ENCODE measurements at regions of chr5 and their contacts with region 1.

Region 1: GRCh38 chr5:181191529-181192394 is 13.2 kb downstream of the TRIM7 start:
- DNase-seq: peak; percentile 97
- ATAC-seq: peak; percentile 79

Region 2: DNA sequence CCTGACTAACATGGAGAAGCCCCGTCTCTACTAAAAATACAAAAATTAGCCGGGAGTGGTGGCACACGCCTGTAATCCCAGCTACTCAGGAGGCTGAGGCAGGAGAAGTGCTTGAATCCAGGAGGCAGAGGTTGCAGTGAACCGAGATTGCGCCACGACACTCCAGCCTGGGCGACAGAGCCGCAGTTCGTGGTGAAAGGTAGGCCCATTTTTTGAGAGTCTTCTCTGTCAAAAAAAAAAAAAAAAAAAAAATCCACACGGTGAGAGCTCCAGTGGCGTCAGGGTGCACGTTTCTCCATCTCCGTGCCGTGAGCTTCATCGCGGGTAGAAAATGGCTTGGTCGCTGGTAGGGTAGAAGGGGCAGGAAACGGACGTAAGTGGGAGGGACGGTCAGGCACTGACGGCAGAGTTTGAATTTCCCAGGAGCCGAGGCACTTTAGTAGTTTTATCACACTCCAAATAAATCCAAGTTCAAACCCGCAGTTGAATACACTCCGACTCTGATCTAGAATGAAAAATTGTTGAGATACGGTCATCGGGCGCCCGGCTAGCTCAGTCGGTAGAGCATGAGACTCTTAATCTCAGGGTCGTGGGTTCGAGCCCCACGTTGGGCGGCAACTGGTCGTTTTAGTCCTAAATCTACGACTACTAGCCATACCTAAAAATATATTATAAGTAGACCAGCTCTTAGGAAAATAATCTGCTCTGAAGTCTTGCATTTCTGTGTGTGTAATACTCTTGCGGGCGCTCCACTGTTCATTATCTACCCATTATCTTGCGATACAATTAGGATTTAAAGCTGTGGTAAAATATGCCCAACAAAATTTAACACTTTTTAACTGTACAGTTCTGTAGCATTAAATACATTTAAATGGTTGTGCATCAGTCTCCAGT is 15.7 kb after region 1 on chr5:
- intact Hi-C with region 1: loop called (anchors 2 kb)
- DNase-seq: peak; percentile 87
- ATAC-seq: peak; percentile 48

Region 3: DNA sequence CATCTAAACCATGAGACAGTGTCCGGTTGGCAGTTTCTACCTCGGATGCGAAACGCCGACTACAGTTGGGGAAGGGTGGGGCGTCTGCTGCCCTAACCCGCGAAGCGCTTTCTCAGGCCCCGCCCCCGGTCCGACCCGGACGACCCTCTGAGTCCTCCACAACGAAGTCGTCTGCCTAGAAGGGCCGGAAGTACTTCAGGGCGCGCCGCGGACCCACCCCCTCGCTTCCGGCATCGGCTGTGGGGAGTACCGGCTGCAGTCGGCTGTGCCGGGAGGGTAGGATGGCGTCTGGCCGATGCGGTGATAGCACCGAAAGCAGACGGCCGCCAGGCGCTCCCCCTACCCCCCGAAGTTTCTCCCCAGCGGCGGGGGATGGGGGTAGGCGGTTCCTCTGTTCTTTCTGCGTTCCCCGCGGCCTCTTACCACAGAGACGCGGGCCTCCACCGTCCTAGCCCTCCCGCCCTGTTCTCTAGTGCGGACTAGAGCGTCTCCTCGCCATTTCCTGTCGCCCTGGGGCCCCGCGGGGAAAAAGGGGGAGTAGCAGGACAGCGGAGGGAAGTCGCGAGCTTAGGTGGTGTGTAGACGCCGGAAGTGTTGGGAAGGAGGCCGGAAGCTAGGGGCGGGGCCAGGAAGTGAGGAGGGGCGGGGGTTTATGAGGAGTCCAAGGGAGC is 31.4 kb after region 1 on chr5 and contains the start of gene TRIM41:
- intact Hi-C with region 1: loop called (anchors 5 kb)
- DNase-seq: peak; percentile 100
- ATAC-seq: peak; percentile 89
- total RNA-seq, gene TRIM41: 20.7 TPM

Region 4: GRCh38 chr5:181261320-181262049 is 69.7 kb after region 1 on chr5:
- intact Hi-C with region 1: loop called (anchors 2 kb)
- DNase-seq: peak; percentile 88
- ATAC-seq: peak; percentile 80